ENCODE measurements at regions of chr17 and their contacts with region 1.

Region 1: GRCh38 chr17:81871387-81872230 is 472 bp upstream of the ARHGDIA start:
- DNase-seq: peak; percentile 91 to 98 (median 96)
- ATAC-seq: peak; percentile 39
- H3K4me3 ChIP-seq: peak overlapping the region; percentile 83
- H3K4me3 Mint-ChIP-seq: peak overlapping the region; percentile 90
- H3K27ac ChIP-seq: peak overlapping the region; percentile 95 to 98
- H3K27ac Mint-ChIP-seq: peak overlapping the region; percentile 95
- H3K4me1 ChIP-seq: peaks cover 57% of the 10 kb centered on the region
- H3K4me1 Mint-ChIP-seq: peaks cover 43% of the 10 kb centered on the region
- H3K27me3 ChIP-seq: peaks cover 0 to 3% of the 10 kb centered on the region in 2 experiments
- H3K27me3 Mint-ChIP-seq: no peaks in the 10 kb centered on the region
- CTCF ChIP-seq: peak; percentile 49

Region 2: GRCh38 chr17:81702971-81703746 is 168.4 kb before region 1 on chr17 and contains the start of gene MRPL12:
- CTCF ChIA-PET with region 1: no interaction called
- POLR2A ChIA-PET with region 1: interaction called, 10 read pairs
- intact Hi-C with region 1: no loop called
- DNase-seq: peak; percentile 74 to 94 (median 85)
- ATAC-seq: peak; percentile 87
- H3K4me3 ChIP-seq: peak within 1 kb of the TSS; percentile 93
- H3K4me3 Mint-ChIP-seq: peak within 1 kb of the TSS; percentile 94
- H3K27ac ChIP-seq: peak within 1 kb of the TSS; percentile 94
- H3K27ac Mint-ChIP-seq: peak within 1 kb of the TSS; percentile 97
- H3K4me1 ChIP-seq: peaks cover 39% of the 10 kb centered on the region
- H3K4me1 Mint-ChIP-seq: peaks cover 27% of the 10 kb centered on the region
- H3K27me3 ChIP-seq: no peaks in the 10 kb centered on the region
- H3K27me3 Mint-ChIP-seq: no peaks in the 10 kb centered on the region
- CTCF ChIP-seq: peak; percentile 12
- total RNA-seq, gene MRPL12: 26.2 to 26.5 TPM

Region 3: DNA sequence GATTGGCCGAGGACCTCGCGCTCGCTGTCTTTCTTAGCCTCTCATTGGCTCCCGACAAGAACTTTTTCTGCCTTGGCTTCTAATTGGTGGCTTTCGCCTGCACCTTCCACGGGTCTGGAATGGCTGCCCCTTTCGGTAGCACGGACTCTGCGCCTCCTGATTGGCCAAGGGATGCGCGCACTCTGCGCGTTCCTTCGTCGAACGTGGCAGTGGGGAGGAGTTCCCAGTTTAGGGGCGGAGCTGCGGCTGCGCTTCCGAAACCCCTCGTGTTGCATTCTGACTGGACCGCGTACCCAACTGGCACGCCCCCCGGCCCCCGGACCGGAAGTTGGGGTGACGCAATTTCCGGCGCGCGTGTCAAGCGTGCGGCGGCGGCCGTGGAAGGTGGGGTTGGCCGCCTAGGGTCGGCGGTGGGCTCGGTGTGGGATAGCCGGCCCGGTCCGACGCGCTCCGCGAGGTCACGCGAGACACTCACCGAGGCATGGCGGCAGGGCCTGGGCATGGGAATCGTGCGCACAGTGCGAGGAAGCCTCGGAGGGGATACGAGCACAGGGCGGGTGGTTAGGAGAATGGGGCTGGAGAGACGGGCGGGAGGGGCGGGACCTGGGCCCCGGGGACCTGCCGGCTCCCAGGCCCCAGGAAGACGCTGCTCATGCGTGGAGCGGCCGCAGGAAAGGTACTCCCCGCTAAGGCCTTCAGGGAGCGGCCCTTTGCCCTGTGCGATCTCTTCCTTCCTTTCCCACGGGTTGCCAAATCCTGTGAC is 10.7 kb before region 1 on chr17:
- CTCF ChIA-PET with region 1: interaction called, 3 read pairs
- POLR2A ChIA-PET with region 1: interaction called, 63 read pairs
- intact Hi-C with region 1: loop called (anchors 1 kb)
- DNase-seq: peak; percentile 98 to 100 (median 99)
- ATAC-seq: peak; percentile 86
- H3K4me3 ChIP-seq: peak overlapping the region; percentile 63
- H3K4me3 Mint-ChIP-seq: peak overlapping the region; percentile 94
- H3K27ac ChIP-seq: peak overlapping the region; percentile 93 to 95
- H3K27ac Mint-ChIP-seq: peak overlapping the region; percentile 96
- H3K4me1 ChIP-seq: peaks cover 60% of the 10 kb centered on the region
- H3K4me1 Mint-ChIP-seq: peaks cover 29% of the 10 kb centered on the region
- H3K27me3 ChIP-seq: no peaks in the 10 kb centered on the region
- H3K27me3 Mint-ChIP-seq: no peaks in the 10 kb centered on the region
- CTCF ChIP-seq: no peak

Region 4: GRCh38 chr17:81911277-81911961 is 39.8 kb after region 1 on chr17 and contains the start of gene PCYT2:
- CTCF ChIA-PET with region 1: no interaction called
- POLR2A ChIA-PET with region 1: interaction called, 13 read pairs
- intact Hi-C with region 1: no loop called
- DNase-seq: peak; percentile 89 to 97 (median 93)
- ATAC-seq: peak; percentile 97
- H3K4me3 ChIP-seq: peak within 1 kb of the TSS; percentile 72
- H3K4me3 Mint-ChIP-seq: peak within 1 kb of the TSS; percentile 92
- H3K27ac ChIP-seq: peak within 1 kb of the TSS in 1 of 2 donors; percentile 29
- H3K27ac Mint-ChIP-seq: peak within 1 kb of the TSS; percentile 73
- H3K4me1 ChIP-seq: peaks cover 33% of the 10 kb centered on the region
- H3K4me1 Mint-ChIP-seq: peaks cover 11% of the 10 kb centered on the region
- H3K27me3 ChIP-seq: no peaks in the 10 kb centered on the region
- H3K27me3 Mint-ChIP-seq: no peaks in the 10 kb centered on the region
- CTCF ChIP-seq: no peak
- total RNA-seq, gene PCYT2: 18.7 to 18.9 TPM

Region 5: GRCh38 chr17:82022981-82023374 is 151.4 kb after region 1 on chr17 and contains the start of gene LRRC45:
- CTCF ChIA-PET with region 1: no interaction called
- POLR2A ChIA-PET with region 1: interaction called, 4 read pairs
- intact Hi-C with region 1: loop called (anchors 5 kb)
- DNase-seq: peak; percentile 99 to 100 (median 100)
- ATAC-seq: peak; percentile 94
- H3K4me3 ChIP-seq: peak within 1 kb of the TSS; percentile 71
- H3K4me3 Mint-ChIP-seq: peak within 1 kb of the TSS; percentile 92
- H3K27ac ChIP-seq: peak within 1 kb of the TSS in 1 of 2 donors; percentile 46
- H3K27ac Mint-ChIP-seq: peak within 1 kb of the TSS; percentile 69
- H3K4me1 ChIP-seq: peaks cover 47% of the 10 kb centered on the region
- H3K4me1 Mint-ChIP-seq: peaks cover 21% of the 10 kb centered on the region
- H3K27me3 ChIP-seq: no peaks in the 10 kb centered on the region
- H3K27me3 Mint-ChIP-seq: no peaks in the 10 kb centered on the region
- CTCF ChIP-seq: no peak
- total RNA-seq, gene LRRC45: 17.7 to 17.9 TPM

Region 6: DNA sequence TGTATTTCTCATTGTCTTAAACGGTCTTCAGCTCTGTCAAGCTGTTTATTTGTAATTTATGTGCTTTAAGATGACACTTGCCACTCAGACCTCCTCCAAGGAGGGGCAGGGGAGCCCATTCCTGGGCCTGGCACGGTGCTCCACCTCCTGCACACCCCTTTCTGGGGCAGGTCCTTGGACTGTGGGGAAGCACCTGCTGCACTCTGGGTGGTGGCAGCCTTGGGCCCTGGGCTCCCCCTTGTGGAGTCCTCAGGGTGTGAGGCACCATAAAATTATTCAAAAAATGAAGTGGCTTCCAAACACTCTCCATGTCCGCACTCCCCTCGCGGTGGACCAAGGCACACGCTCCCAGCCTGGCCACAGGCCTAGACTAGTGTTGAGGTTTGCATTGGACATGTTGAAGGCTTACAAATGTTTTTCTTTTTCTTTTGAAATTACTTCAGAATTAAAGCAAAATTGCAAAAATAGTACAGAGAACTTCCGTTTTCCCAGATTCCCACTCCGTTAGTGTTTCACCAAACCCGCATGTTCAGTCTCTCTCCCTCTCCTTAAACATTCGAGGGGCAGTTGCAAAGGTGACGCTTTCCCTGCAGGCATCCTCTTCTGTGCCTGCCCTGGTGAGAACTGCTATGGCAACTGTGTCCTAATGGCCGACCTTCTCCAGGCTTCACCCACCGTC is 680.3 kb after region 1 on chr17:
- CTCF ChIA-PET with region 1: no interaction called
- POLR2A ChIA-PET with region 1: no interaction called
- intact Hi-C with region 1: no loop called
- DNase-seq: peak; percentile 59 to 88 (median 76)
- ATAC-seq: peak; percentile 100
- H3K4me3 ChIP-seq: no peak overlapping the region
- H3K4me3 Mint-ChIP-seq: no peak overlapping the region
- H3K27ac ChIP-seq: no peak overlapping the region
- H3K27ac Mint-ChIP-seq: peak overlapping the region; percentile 56
- H3K4me1 ChIP-seq: peaks cover 24% of the 10 kb centered on the region
- H3K4me1 Mint-ChIP-seq: peaks cover 40% of the 10 kb centered on the region
- H3K27me3 ChIP-seq: no peaks in the 10 kb centered on the region
- H3K27me3 Mint-ChIP-seq: no peaks in the 10 kb centered on the region
- CTCF ChIP-seq: peak; percentile 77

Measured in CD4-positive, alpha-beta T cell (primary cell).